Endothelial cell of umbilical vein (primary cell): ENCODE measurements at regions of chr10 and their contacts with region 1.

Region 1: GRCh38 chr10:122879339-122880273 is at the start of gene FAM24B:
- DNase-seq: peak; percentile 99
- H3K4me3 ChIP-seq: peak within 1 kb of the TSS; percentile 39 to 56 (median 55)
- H3K27ac ChIP-seq: peak within 1 kb of the TSS; percentile 43
- H3K4me1 ChIP-seq: peaks cover 26% of the 10 kb centered on the region
- H3K27me3 ChIP-seq: no peaks in the 10 kb centered on the region
- CTCF ChIP-seq: no peak
- POLR2A ChIP-seq: peak; percentile 42
- total RNA-seq, gene FAM24B: 8.5 and 10.6 TPM in 2 replicates

Region 2: DNA sequence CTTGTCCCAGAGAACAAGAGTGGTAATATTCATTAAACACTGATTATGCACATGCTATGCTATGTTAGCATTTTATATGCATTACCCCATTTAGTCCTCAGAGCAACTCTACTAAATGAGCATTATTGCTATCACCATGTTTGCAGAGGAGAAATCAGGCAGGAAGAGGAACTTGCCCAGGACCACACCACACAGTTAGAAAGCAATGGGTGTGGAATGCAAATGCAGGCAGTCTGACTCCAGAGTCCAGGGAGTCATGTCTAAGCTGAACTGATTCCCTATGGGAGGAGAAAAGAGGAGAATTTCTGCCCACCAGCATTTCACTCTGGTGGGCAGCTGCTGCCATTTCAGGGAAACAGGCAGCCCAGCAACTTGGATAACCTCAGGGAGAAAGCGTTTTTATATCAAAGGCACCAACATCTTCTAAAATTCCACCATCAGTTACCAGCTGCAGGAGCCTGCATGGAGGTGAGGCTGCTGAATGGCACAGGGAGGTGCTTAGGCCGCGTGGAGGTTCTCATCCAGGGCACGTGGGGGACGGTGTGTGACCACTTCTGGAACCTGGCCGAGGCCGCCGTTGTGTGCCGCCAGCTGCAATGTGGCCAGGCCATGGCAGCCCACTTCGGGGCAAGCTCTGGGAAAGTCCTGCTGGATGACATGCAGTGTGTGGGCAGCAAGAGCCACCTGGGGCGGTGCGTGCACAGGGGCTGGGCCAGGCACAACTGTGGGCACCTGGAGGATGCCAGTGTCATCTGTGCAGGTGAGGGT is 111.8 kb before region 1 on chr10:
- CTCF ChIA-PET with region 1: no interaction called
- POLR2A ChIA-PET with region 1: no interaction called
- dilution Hi-C with region 1: no loop called
- intact Hi-C with region 1: no loop called
- DNase-seq: no peak
- H3K4me3 ChIP-seq: no peak overlapping the region
- H3K27ac ChIP-seq: no peak overlapping the region
- H3K4me1 ChIP-seq: no peaks in the 10 kb centered on the region
- H3K27me3 ChIP-seq: no peaks in the 10 kb centered on the region
- CTCF ChIP-seq: no peak
- POLR2A ChIP-seq: no peak

Region 3: GRCh38 chr10:122861711-122862161 is 17.9 kb before region 1 on chr10:
- CTCF ChIA-PET with region 1: interaction called, 3 read pairs
- POLR2A ChIA-PET with region 1: no interaction called
- dilution Hi-C with region 1: no loop called
- intact Hi-C with region 1: loop called (anchors 1 kb)
- DNase-seq: peak; percentile 78
- H3K4me3 ChIP-seq: no peak overlapping the region
- H3K27ac ChIP-seq: peak overlapping the region; percentile 94
- H3K4me1 ChIP-seq: peaks cover 40% of the 10 kb centered on the region
- H3K27me3 ChIP-seq: no peaks in the 10 kb centered on the region
- CTCF ChIP-seq: no peak
- POLR2A ChIP-seq: peak; percentile 56

Region 4: GRCh38 chr10:122911889-122912484 is 32.4 kb after region 1 on chr10:
- CTCF ChIA-PET with region 1: no interaction called
- POLR2A ChIA-PET with region 1: no interaction called
- dilution Hi-C with region 1: no loop called
- intact Hi-C with region 1: loop called (anchors 2 kb)
- DNase-seq: peak; percentile 64
- H3K4me3 ChIP-seq: no peak overlapping the region
- H3K27ac ChIP-seq: no peak overlapping the region
- H3K4me1 ChIP-seq: no peaks in the 10 kb centered on the region
- H3K27me3 ChIP-seq: no peaks in the 10 kb centered on the region
- CTCF ChIP-seq: no peak
- POLR2A ChIP-seq: no peak